H1 (cell line): ENCODE measurements at regions of chr22 and their contacts with region 1.

Region 1: DNA sequence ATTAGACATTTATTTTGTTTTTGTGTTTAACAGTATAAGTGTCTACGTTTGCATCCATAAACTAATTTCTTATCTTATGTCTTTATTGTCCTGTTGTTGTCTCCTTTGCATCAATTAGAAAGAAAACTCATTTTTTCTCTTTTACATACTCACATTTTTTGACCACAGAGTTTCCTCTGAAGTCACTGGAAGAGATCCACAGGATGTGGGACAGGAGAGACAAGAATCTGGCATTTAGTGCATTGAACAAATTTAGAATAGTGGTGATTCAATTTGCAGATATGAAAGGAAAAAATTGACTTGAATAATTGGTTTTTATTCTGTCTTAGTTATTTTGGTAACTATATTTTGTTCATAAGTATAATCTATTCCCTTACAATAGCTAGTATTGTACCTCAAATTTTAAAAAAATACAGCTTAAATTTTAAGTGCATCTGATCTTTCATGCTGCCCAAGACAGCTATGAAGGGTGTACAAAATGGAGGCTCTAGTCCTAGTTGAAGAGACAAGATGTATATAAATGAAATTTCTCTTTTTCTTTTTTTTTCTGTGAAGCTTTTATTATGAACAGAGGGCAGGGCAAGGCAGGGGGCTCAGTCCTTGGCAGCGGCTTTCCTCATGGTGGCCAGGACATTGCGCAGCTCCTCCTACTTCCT is 24.4 kb downstream of the HORMAD2 start:
- DNase-seq: no peak
- H3K4me3 ChIP-seq: no peak overlapping the region
- H3K27ac ChIP-seq: no peak overlapping the region
- H3K4me1 ChIP-seq: no peaks in the 10 kb centered on the region
- H3K27me3 ChIP-seq: no peaks in the 10 kb centered on the region
- CTCF ChIP-seq: no peak
- EP300 ChIP-seq: no peak
- POLR2A ChIP-seq: no peak
- RAD21 ChIP-seq: no peak

Region 2: DNA sequence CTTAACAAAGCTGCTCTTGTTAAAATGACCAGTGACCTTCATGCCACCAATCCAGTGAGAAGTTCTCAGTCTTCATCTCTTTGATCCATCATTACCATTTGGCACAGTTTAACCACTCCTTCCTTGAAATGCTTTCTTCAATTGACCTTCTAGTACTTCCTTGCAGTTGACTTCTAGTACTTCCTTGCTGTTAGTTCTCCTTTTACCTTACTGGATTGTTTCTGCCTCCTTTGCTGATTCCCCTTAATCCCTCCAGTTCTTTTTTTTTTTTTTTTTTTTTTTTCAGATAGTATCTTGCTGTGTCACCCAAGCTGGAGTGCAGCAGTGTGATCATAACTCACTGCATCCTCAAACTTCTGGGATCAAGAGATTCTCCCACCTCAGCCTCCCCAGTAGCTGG is 90.4 kb before region 1 on chr22:
- CTCF ChIA-PET with region 1: no interaction called
- POLR2A ChIA-PET with region 1: no interaction called
- DNase-seq: no peak
- H3K4me3 ChIP-seq: no peak overlapping the region
- H3K27ac ChIP-seq: no peak overlapping the region
- H3K4me1 ChIP-seq: no peaks in the 10 kb centered on the region
- H3K27me3 ChIP-seq: no peaks in the 10 kb centered on the region
- CTCF ChIP-seq: no peak
- EP300 ChIP-seq: no peak
- POLR2A ChIP-seq: no peak
- RAD21 ChIP-seq: no peak

Region 3: GRCh38 chr22:30077279-30077880 is 27.2 kb before region 1 on chr22:
- CTCF ChIA-PET with region 1: no interaction called
- POLR2A ChIA-PET with region 1: no interaction called
- DNase-seq: no peak
- H3K4me3 ChIP-seq: no peak overlapping the region
- H3K27ac ChIP-seq: no peak overlapping the region
- H3K4me1 ChIP-seq: peaks cover 0 to 5% (median 1%) of the 10 kb centered on the region in 4 experiments; a peak in 3 of 7 replicates
- H3K27me3 ChIP-seq: peaks cover 0 to 5% (median 2%) of the 10 kb centered on the region in 4 experiments; a peak in 2 of 7 replicates
- CTCF ChIP-seq: no peak
- EP300 ChIP-seq: no peak
- POLR2A ChIP-seq: no peak
- RAD21 ChIP-seq: no peak

Region 4: DNA sequence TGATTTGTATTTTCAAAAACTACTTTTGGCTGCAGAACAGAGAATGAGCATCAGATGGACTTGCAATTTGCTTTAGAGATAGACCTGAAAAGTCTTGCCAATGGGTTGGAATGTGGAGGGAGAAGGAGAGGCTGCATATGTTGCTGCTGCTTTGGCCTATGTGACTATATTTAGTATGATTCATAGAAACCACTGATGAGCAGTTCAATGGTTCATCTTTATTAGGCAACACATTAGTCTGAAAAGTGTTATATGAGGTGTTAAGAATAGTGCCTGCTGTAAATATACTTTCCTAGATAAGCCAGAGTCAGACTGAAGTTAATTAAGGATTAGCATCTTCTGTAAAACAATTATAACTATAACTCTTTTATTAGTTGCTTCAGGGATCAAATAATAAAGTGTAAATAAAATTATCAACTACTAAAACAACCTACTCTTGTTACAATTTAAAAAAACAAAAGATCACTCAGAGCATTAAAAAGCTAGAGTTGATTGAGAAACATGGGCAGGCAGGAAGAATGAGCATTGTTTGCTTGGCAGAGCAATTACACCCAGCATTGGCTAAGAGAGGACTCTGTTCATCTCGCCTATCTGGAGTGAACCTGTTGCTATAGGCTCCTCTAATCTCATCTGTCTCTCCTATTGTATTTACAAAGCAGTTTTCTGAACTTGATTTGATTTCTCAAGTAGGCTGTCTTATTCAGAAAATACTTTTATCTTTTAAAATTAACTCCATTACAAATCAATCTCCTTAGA is 11.9 kb after region 1 on chr22:
- CTCF ChIA-PET with region 1: interaction called, 27 read pairs
- POLR2A ChIA-PET with region 1: interaction called, 3 read pairs
- DNase-seq: no peak
- H3K4me3 ChIP-seq: no peak overlapping the region
- H3K27ac ChIP-seq: no peak overlapping the region
- H3K4me1 ChIP-seq: no peaks in the 10 kb centered on the region
- H3K27me3 ChIP-seq: no peaks in the 10 kb centered on the region
- CTCF ChIP-seq: no peak
- EP300 ChIP-seq: no peak
- POLR2A ChIP-seq: no peak
- RAD21 ChIP-seq: no peak

Region 5: GRCh38 chr22:30205281-30206115 is 100.9 kb after region 1 on chr22:
- CTCF ChIA-PET with region 1: interaction called, 13 read pairs
- POLR2A ChIA-PET with region 1: no interaction called
- DNase-seq: no peak
- H3K4me3 ChIP-seq: no peak overlapping the region
- H3K27ac ChIP-seq: no peak overlapping the region
- H3K4me1 ChIP-seq: peaks cover 0 to 9% (median 2%) of the 10 kb centered on the region in 4 experiments; a peak in 5 of 7 replicates
- H3K27me3 ChIP-seq: no peaks in the 10 kb centered on the region; a peak in 1 of 7 replicates
- CTCF ChIP-seq: no peak
- EP300 ChIP-seq: no peak
- POLR2A ChIP-seq: no peak
- RAD21 ChIP-seq: no peak

Region 6: DNA sequence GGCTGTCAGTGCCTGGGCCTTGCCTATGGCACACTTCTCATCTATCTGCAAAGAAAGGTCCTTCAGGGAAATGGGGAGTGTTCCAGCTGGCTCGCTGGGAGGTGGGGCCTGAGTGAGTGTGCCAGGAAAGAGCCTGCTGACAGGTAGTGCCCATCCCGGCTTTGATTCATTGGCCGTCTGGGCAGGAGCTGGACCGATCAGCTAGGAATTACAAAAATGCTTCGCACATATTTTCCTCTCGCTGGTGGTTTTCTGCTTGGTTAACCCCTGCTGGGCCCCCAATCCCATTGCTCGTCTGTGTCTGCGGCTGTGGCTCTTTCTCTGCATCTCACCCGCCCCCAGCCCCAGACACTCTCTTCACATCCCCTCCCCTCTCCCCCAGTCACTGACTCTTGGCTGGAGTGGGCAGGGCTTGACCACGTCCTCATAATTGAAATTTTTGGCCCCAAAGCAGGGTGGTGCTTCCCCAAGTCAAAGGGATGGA is 131.1 kb after region 1 on chr22:
- CTCF ChIA-PET with region 1: interaction called, 23 read pairs
- POLR2A ChIA-PET with region 1: no interaction called
- DNase-seq: no peak
- H3K4me3 ChIP-seq: no peak overlapping the region
- H3K27ac ChIP-seq: no peak overlapping the region
- H3K4me1 ChIP-seq: peaks cover 8 to 29% (median 18%) of the 10 kb centered on the region in 4 experiments
- H3K27me3 ChIP-seq: no peaks in the 10 kb centered on the region
- CTCF ChIP-seq: no peak
- EP300 ChIP-seq: no peak
- POLR2A ChIP-seq: no peak
- RAD21 ChIP-seq: no peak

Region 7: GRCh38 chr22:30262917-30263741 is 158.5 kb after region 1 on chr22:
- CTCF ChIA-PET with region 1: interaction called, 17 read pairs
- POLR2A ChIA-PET with region 1: no interaction called
- DNase-seq: peak; percentile 66 to 98
- H3K4me3 ChIP-seq: no peak overlapping the region
- H3K27ac ChIP-seq: no peak overlapping the region
- H3K4me1 ChIP-seq: peaks cover 0 to 4% (median 2%) of the 10 kb centered on the region in 4 experiments; a peak in 6 of 7 replicates
- H3K27me3 ChIP-seq: no peaks in the 10 kb centered on the region; a peak in 2 of 7 replicates
- CTCF ChIP-seq: peak; percentile 85 to 99 (median 90)
- EP300 ChIP-seq: no peak
- POLR2A ChIP-seq: no peak
- RAD21 ChIP-seq: peak; percentile 59 to 72